Gastrocnemius medialis (tissue), 4 donors: ENCODE measurements at regions of chr12 and their contacts with region 1.

Region 1: GRCh38 chr12:12327802-12328201 is 22.2 kb downstream of the MANSC1 start:
- DNase-seq: no peak
- ATAC-seq: no peak
- H3K4me3 ChIP-seq: no peak overlapping the region
- H3K27ac ChIP-seq: no peak overlapping the region
- H3K4me1 ChIP-seq: peaks cover 0 to 5% of the 10 kb centered on the region in 2 donors
- H3K27me3 ChIP-seq: no peaks in the 10 kb centered on the region
- CTCF ChIP-seq: peak; percentile 45 to 70 (median 49)
- POLR2A ChIP-seq: no peak

Region 2: GRCh38 chr12:12081836-12082497 is 245.8 kb before region 1 on chr12:
- in situ Hi-C with region 1: loop called (anchors 5 to 25 kb)
- intact Hi-C with region 1: loop called (anchors 2 kb)
- DNase-seq: no peak
- ATAC-seq: peak; percentile 74 to 82
- H3K4me3 ChIP-seq: no peak overlapping the region
- H3K27ac ChIP-seq: peak overlapping the region in 3 of 4 donors; percentile 6 to 52 (median 21)
- H3K4me1 ChIP-seq: no peaks in the 10 kb centered on the region
- H3K27me3 ChIP-seq: no peaks in the 10 kb centered on the region
- CTCF ChIP-seq: peak in 4 of 5 experiments; percentile 8 to 41 (median 22)
- POLR2A ChIP-seq: no peak

Region 3: GRCh38 chr12:12171991-12172521 is 155.7 kb before region 1 on chr12:
- in situ Hi-C with region 1: no loop called
- intact Hi-C with region 1: no loop called
- DNase-seq: no peak
- ATAC-seq: no peak
- H3K4me3 ChIP-seq: no peak overlapping the region
- H3K27ac ChIP-seq: no peak overlapping the region
- H3K4me1 ChIP-seq: peaks cover 9 to 10% of the 10 kb centered on the region in 2 donors
- H3K27me3 ChIP-seq: no peaks in the 10 kb centered on the region
- CTCF ChIP-seq: no peak
- POLR2A ChIP-seq: no peak

Region 4: DNA sequence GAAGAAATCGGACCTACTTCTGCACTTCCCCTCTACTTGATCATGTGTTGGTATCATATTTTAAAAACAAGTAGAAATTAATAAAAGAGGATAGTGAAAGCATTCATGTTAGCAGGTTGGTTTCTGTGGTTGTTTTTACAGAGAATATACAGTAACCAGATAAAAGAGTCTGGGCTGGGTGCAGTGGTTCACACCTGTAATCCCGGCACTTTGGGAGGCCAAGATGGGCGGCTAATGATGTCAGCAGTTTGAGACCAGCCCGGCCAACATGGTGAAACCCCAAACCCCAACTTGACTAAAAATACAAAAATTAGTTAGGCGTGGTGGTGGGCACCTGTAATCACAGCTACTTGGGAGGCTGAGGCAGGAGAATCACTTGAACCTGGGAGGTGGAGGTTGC is 116.8 kb before region 1 on chr12:
- in situ Hi-C with region 1: no loop called
- intact Hi-C with region 1: no loop called
- DNase-seq: no peak
- ATAC-seq: no peak
- H3K4me3 ChIP-seq: no peak overlapping the region
- H3K27ac ChIP-seq: no peak overlapping the region
- H3K4me1 ChIP-seq: peaks cover 26 to 32% of the 10 kb centered on the region in 2 donors
- H3K27me3 ChIP-seq: no peaks in the 10 kb centered on the region
- CTCF ChIP-seq: no peak
- POLR2A ChIP-seq: no peak